Caco-2 (cell line): ENCODE measurements at regions of chr9 and their contacts with region 1.

Region 1: GRCh38 chr9:2158111-2158610 is 143.0 kb downstream of the SMARCA2 start:
- DNase-seq: no peak
- H3K4me3 ChIP-seq: peak overlapping the region; percentile 31
- H3K4me3 Mint-ChIP-seq: peak overlapping the region; percentile 77
- H3K27ac Mint-ChIP-seq: no peak overlapping the region
- H3K4me1 ChIP-seq: no peaks in the 10 kb centered on the region
- H3K4me1 Mint-ChIP-seq: peaks cover 6% of the 10 kb centered on the region
- H3K27me3 ChIP-seq: no peaks in the 10 kb centered on the region
- H3K27me3 Mint-ChIP-seq: peaks cover 3% of the 10 kb centered on the region
- CTCF ChIP-seq: no peak

Region 2: DNA sequence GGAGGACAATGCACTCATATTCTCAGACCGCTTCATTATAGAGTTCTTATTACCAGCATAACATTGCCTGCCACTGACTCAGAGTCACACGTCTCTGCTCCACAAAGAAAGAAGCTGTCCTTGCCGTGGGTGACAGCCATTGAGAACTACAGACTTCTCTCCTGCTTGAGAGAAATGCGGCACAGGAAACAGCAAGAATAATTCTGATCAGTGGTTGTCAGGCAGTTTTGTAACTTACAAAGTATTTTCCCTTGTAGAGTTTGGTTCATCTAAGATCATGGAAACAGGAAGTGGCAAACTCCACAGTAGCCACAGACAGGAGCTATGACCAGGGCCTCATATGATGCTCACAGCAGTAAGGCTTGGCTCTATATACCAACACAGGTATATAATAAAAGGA is 606.2 kb after region 1 on chr9:
- CTCF ChIA-PET with region 1: no interaction called
- POLR2A ChIA-PET with region 1: interaction called, 11 read pairs
- intact Hi-C with region 1: no loop called
- DNase-seq: no peak
- H3K4me3 ChIP-seq: no peak overlapping the region
- H3K4me3 Mint-ChIP-seq: no peak overlapping the region
- H3K27ac Mint-ChIP-seq: no peak overlapping the region
- H3K4me1 ChIP-seq: peaks cover 6% of the 10 kb centered on the region; the same call in 1 of the 2 replicates
- H3K4me1 Mint-ChIP-seq: peaks cover 22% of the 10 kb centered on the region
- H3K27me3 ChIP-seq: no peaks in the 10 kb centered on the region
- H3K27me3 Mint-ChIP-seq: no peaks in the 10 kb centered on the region
- CTCF ChIP-seq: no peak